T-cell (primary cell): ENCODE measurements at regions of chr4 and their contacts with region 1.

Region 1: GRCh38 chr4:23680671-23681518 is 209.0 kb downstream of the PPARGC1A start:
- DNase-seq: no peak
- ATAC-seq: no peak
- H3K4me3 ChIP-seq: no peak overlapping the region
- H3K4me3 Mint-ChIP-seq: no peak overlapping the region
- H3K27ac ChIP-seq: no peak overlapping the region
- H3K27ac Mint-ChIP-seq: no peak overlapping the region
- H3K4me1 ChIP-seq: no peaks in the 10 kb centered on the region
- H3K4me1 Mint-ChIP-seq: no peaks in the 10 kb centered on the region
- H3K27me3 ChIP-seq: no peaks in the 10 kb centered on the region
- H3K27me3 Mint-ChIP-seq: peaks cover 0 to under 1% of the 10 kb centered on the region in 2 donors

Region 2: GRCh38 chr4:23245203-23245832 is 435.6 kb before region 1 on chr4:
- CTCF ChIA-PET with region 1: no interaction called
- POLR2A ChIA-PET with region 1: interaction called in 1 of 2 experiments, 10 read pairs
- DNase-seq: no peak
- ATAC-seq: no peak
- H3K4me3 ChIP-seq: no peak overlapping the region
- H3K4me3 Mint-ChIP-seq: no peak overlapping the region
- H3K27ac ChIP-seq: no peak overlapping the region
- H3K27ac Mint-ChIP-seq: no peak overlapping the region
- H3K4me1 ChIP-seq: no peaks in the 10 kb centered on the region
- H3K4me1 Mint-ChIP-seq: no peaks in the 10 kb centered on the region
- H3K27me3 ChIP-seq: no peaks in the 10 kb centered on the region
- H3K27me3 Mint-ChIP-seq: no peaks in the 10 kb centered on the region